ENCODE measurements at regions of chr15 and their contacts with region 1.

Region 1: DNA sequence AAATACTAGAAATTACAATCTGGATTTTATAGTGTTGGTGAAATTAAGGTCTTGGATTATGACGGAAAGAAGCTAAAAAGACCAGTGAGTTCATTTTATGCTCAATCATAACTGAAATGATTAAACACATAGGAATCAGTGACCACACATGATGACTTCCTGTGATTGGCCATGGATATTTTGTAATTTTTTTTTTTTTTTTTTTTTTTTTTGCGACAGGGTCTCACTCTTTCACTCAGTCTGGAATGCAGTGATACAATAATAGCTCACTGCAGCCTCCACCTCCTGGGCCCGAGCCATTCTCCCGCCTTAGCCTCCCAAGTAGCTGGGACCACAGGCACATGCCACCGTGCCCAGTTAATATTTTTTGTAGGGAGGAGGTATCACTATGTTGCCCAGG is 47.4 kb downstream of the PAQR5 start:
- DNase-seq: no peak
- H3K4me3 ChIP-seq: no peak overlapping the region
- H3K27ac ChIP-seq: no peak overlapping the region
- H3K27me3 ChIP-seq: no peaks in the 10 kb centered on the region
- CTCF ChIP-seq: no peak

Region 2: DNA sequence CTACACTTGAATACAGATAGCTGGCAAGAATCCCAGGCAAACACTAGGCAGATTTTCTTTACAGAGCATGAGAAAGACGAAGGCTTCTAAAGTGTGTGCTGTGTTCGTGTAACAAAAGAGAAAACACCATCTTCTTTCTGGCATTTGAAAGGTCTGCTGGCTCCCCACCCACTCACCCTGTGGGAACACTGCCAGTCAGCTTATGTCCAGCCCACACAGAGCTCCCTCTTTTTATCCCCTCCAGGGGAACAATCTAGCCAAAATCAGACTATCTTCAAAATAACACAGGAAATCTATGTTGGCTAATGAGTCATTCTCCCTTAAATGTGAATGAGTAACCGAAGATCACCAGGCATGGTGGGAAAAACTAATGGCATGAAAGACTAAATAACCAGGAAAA is 93.0 kb before region 1 on chr15:
- CTCF ChIA-PET with region 1: no interaction called
- POLR2A ChIA-PET with region 1: interaction called, 11 read pairs
- DNase-seq: peak; percentile 74
- H3K4me3 ChIP-seq: peak overlapping the region; percentile 4; the same call in 1 of the 2 replicates
- H3K27ac ChIP-seq: peak overlapping the region; percentile 76
- H3K27me3 ChIP-seq: no peaks in the 10 kb centered on the region
- CTCF ChIP-seq: no peak

Measured in AG04450 (cell line).